ENCODE measurements at regions of chr5 and their contacts with region 1.

Region 1: DNA sequence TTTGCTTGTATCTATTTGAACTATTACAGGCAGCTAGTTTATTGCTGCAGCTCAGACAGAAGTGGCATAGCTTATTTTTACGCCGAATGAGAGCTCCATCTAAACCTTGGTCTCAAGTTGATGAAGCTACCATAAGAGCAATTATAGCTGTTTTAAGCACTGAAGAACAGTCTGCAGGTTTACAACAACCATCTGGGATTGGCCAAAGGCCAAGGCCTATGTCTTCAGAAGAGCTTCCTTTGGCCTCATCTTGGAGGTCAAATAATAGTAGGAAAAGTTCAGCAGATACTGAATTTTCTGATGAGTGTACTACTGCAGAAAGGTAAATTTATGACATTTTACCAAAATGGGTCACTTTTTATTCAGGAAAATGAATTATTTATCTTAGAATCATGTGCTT is 67.9 kb downstream of the YTHDC2 start:
- DNase-seq: no peak
- H3K4me3 Mint-ChIP-seq: no peak overlapping the region
- H3K27ac Mint-ChIP-seq: no peak overlapping the region
- H3K4me1 Mint-ChIP-seq: no peaks in the 10 kb centered on the region
- H3K27me3 Mint-ChIP-seq: no peaks in the 10 kb centered on the region
- CTCF ChIP-seq: no peak

Region 2: DNA sequence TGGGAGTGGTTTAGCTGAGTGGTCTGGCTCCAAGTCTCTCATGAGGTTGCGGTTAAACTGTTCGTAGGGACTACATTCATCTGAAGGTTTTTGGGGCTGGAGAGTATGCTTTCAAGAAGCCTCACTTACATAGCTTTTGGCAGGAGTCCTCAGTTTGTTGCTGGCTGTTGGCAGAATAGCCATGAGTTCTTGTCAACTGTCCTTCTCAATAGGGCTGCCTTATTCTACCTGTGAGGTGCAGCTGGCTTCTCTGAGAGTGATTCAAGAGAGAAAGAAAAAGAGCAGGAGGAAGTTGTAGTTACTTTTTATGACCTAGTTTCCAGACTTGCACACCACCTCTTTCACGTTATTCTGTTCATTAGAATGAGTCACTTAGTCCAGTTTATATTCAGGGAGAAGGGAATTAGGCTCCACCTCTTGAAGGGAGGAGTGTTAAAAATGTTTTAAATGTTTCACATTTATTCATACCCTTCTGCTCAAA is 34.6 kb before region 1 on chr5:
- CTCF ChIA-PET with region 1: no interaction called
- intact Hi-C with region 1: loop called (anchors 5 kb)
- DNase-seq: no peak
- H3K4me3 Mint-ChIP-seq: no peak overlapping the region
- H3K27ac Mint-ChIP-seq: no peak overlapping the region
- H3K4me1 Mint-ChIP-seq: peaks cover 16% of the 10 kb centered on the region
- H3K27me3 Mint-ChIP-seq: no peaks in the 10 kb centered on the region
- CTCF ChIP-seq: no peak

Measured in Calu3 (cell line).